ENCODE measurements at regions of chr20 and their contacts with region 1.

Region 1: DNA sequence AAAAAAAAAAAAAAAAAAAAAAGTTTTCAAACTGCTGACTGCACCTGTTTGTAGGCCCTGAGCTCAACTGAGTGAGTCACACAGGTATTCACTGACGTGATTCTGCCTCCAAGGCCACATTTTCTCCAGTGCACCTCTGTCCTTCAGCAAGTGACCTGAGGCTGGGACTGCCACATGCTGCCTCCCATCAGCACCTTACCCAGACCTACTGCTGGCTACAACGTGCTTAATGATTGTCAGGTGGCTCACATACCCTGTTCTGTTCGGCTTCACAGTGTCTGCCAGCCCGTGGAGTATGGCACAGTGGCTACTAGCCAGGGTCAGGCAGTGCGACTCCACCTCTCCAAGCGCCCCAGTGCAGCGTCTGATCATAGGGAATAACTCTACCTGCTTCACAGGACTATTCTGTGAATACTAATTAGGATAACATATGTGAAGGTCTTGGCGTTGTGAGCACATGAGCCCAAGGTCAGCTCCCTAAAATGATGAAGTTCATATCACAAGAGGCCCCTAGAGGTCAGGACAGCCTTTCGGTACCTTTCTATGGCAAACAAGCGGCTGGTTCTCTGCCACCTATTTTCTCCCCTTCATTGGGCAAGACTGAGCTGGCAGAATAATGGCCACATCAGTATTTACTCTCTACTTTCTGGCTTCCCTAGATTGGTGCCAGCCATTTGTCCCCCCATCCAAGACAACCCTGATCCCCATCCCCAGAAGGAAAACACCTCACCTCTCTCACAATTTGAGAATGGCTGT is 28.1 kb downstream of the RIPOR3 start:
- DNase-seq: peak in 1 of 2 experiments; percentile 79
- ATAC-seq: peak; percentile 81 to 86
- H3K4me3 ChIP-seq: no peak overlapping the region
- H3K27ac ChIP-seq: peak overlapping the region; percentile 56 to 72; a peak in 5 of 6 replicates
- H3K4me1 ChIP-seq: peaks cover 42% of the 10 kb centered on the region
- CTCF ChIP-seq: peak; percentile 65
- EP300 ChIP-seq: no peak
- POLR2A ChIP-seq: no peak
- RAD21 ChIP-seq: peak; percentile 82 to 86

Region 2: DNA sequence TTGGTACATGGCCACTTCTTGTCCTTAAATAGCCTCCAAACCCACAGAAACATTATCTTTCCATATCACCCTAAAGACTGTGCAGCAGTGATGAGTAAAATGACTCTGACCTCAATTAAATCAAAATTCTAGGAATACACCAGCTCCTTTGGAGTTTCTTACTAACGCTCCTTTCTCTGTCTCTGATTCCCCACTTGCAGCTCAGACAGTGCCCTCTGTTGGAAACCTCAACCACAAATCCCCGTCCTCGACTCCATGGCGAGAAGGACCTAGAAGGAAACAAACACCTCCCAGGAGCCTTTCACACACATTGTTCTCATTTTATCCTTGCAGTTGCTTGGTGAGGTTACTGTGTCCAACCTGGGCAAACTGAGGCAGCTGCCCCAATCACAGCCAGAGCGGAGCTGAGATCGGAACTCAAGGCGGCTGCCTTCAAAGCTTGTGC is 50.4 kb after region 1 on chr20:
- CTCF ChIA-PET with region 1: interaction called, 11 read pairs
- POLR2A ChIA-PET with region 1: interaction called, 5 read pairs
- DNase-seq: peak in 1 of 2 experiments; percentile 56
- ATAC-seq: peak; percentile 54 to 77; a peak in 3 of 6 replicates
- H3K4me3 ChIP-seq: no peak overlapping the region
- H3K27ac ChIP-seq: peak overlapping the region in 1 of 2 experiments; percentile 44; a peak in 2 of 6 replicates
- H3K4me1 ChIP-seq: peaks cover 14% of the 10 kb centered on the region; the same call in 1 of the 3 replicates
- CTCF ChIP-seq: peak; percentile 40
- EP300 ChIP-seq: no peak
- POLR2A ChIP-seq: no peak
- RAD21 ChIP-seq: peak; percentile 56 to 62

Region 3: DNA sequence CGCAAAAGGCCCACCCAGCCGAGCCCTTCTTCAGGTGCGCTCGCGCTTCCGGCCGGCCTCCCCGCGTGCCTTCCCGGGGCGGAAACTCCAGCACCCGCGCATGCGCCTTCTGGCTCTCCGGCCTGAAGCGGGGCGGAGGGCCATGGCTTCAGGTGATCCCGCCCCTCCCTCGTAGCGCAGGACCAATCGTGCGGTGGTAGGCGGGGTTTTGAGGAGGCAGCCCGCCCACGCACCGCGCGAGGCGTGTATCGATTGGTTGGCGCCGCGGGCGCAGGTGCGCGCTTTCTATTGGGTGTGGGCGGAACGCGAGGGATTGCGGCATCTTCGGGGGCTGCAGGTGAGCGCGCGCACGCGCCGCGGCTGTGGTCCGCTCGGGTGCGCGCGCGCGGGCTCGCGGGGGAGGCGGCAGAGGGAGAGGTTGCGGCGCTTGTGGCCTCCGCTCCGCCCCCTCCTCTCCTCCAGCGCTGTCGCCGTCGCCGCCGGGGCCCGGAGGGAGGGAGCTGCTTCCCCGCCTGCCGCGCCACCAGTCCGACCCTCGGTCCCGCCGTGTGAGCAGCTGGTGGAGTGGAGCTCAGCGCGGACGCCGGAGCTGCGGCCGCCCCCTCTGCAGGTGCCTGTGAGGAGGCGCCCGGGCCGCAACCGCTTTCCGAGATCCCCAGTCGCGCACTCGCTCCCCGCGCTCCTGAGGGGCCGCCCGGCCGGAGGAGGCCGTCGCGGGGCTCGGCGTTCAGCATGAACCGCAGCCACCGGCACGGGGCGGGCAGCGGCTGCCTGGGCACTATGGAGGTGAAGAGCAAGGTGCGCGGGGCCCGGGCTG is 68.0 kb after region 1 on chr20 and contains the start of gene PARD6B:
- CTCF ChIA-PET with region 1: interaction called, 11 read pairs
- POLR2A ChIA-PET with region 1: interaction called, 5 read pairs
- DNase-seq: peak; percentile 96 to 100
- ATAC-seq: peak; percentile 76 to 86
- H3K4me3 ChIP-seq: peak within 1 kb of the TSS; percentile 90
- H3K27ac ChIP-seq: peak within 1 kb of the TSS; percentile 96
- H3K4me1 ChIP-seq: peaks cover 68% of the 10 kb centered on the region
- CTCF ChIP-seq: no peak
- EP300 ChIP-seq: no peak
- POLR2A ChIP-seq: peak; percentile 74
- RAD21 ChIP-seq: 0 out of 5 replicates have a peak, but pooled peaks of 1 of the 2 experiments have one; percentile 11
- polyA plus RNA-seq, gene PARD6B: 6.2 and 6.4 TPM in 2 replicates

Measured in A549 (cell line).